SK-N-SH (cell line): ENCODE measurements at regions of chr9 and their contacts with region 1.

Region 1: DNA sequence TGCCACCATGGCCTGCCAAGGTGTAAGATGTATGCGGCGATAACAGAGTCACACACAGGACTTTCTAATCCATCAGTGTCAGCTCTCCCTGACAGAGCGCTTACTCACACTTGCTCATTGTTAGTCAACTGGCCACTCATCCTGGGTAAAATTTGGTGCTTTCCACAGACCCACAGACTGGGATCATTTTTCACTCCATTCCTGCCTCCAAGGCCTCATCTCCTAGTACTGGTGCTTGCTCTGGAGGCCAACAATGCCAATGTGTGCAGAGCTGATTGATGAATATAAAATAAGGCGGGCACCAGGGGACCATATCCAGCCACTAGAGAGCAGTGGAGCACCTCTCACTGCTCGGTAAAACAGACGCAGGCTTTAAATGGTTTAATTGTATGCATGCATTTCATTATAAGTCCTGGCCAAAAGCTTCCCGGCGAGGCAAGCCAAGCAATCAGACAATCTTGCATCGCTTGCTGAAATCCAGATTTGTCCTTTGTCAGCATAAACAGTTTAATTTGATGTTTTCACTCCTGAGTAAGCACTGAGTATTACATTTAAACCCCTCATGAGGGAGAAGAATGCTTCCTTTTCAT is 22.3 kb downstream of the PSMB7 start:
- DNase-seq: peak; percentile 77
- H3K4me3 ChIP-seq: peak overlapping the region in 1 of 2 experiments; percentile 28; a peak in 2 of 4 replicates
- H3K27ac ChIP-seq: peak overlapping the region; percentile 76 to 90
- H3K4me1 ChIP-seq: peaks cover 42 to 51% of the 10 kb centered on the region in 2 experiments
- H3K27me3 ChIP-seq: no peaks in the 10 kb centered on the region
- CTCF ChIP-seq: peak; percentile 69
- EP300 ChIP-seq: peak; percentile 41 to 96
- RAD21 ChIP-seq: peak; percentile 72

Region 2: GRCh38 chr9:124361128-124361527 is 31.8 kb before region 1 on chr9:
- CTCF ChIA-PET with region 1: interaction called, 10 read pairs
- POLR2A ChIA-PET with region 1: no interaction called
- DNase-seq: no peak
- H3K4me3 ChIP-seq: no peak overlapping the region
- H3K27ac ChIP-seq: no peak overlapping the region
- H3K4me1 ChIP-seq: peaks cover 0 to 9% of the 10 kb centered on the region in 2 experiments; a peak in 3 of 4 replicates
- H3K27me3 ChIP-seq: no peaks in the 10 kb centered on the region
- CTCF ChIP-seq: no peak
- EP300 ChIP-seq: no peak
- RAD21 ChIP-seq: no peak

Region 3: GRCh38 chr9:124381170-124381945 is 11.6 kb before region 1 on chr9:
- CTCF ChIA-PET with region 1: interaction called, 87 read pairs
- POLR2A ChIA-PET with region 1: no interaction called
- DNase-seq: no peak
- H3K4me3 ChIP-seq: no peak overlapping the region
- H3K27ac ChIP-seq: no peak overlapping the region
- H3K4me1 ChIP-seq: peaks cover 6 to 9% of the 10 kb centered on the region in 2 experiments; a peak in 3 of 4 replicates
- H3K27me3 ChIP-seq: no peaks in the 10 kb centered on the region
- CTCF ChIP-seq: no peak
- EP300 ChIP-seq: no peak
- RAD21 ChIP-seq: no peak

Region 4: DNA sequence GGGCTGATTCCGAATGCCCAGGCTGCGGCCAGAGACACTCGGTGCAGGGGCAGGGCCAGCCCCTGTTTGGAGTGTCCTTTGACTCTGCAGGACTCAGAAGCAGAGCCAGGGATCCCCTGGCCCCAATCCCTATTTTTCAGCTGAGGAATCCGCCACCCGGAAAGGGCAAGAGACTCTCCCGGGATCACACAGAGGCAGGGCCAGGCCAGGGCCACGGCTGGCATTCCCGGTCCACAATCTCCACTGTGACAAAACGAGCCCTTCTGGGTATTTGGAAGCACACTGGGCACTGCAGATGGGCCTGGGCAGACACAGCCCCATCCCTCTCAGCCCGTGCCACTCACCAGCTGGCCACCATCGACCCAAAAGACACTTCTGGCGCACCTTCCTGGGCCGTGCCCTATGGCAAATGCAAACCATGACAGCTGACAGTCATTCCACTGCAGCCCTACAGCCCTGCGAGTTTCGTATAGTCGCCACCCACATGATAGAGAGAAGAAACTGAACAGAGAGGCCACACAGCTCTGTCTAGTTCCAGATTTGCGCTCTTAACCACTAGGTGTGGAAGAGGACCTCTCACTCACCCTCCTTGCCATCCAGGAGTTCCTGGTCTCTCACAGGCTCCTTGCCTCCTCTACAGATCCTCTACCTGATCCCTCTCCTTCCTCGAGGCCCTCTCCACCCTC is 101.0 kb after region 1 on chr9:
- CTCF ChIA-PET with region 1: no interaction called
- POLR2A ChIA-PET with region 1: no interaction called
- DNase-seq: no peak
- H3K4me3 ChIP-seq: no peak overlapping the region
- H3K27ac ChIP-seq: no peak overlapping the region
- H3K4me1 ChIP-seq: no peaks in the 10 kb centered on the region; a peak in 1 of 4 replicates
- H3K27me3 ChIP-seq: no peaks in the 10 kb centered on the region; the same call in 1 of the 2 replicates
- CTCF ChIP-seq: no peak
- EP300 ChIP-seq: no peak
- RAD21 ChIP-seq: no peak

Region 5: GRCh38 chr9:124532897-124533296 is 139.9 kb after region 1 on chr9:
- CTCF ChIA-PET with region 1: interaction called, 35 read pairs
- POLR2A ChIA-PET with region 1: no interaction called
- DNase-seq: no peak
- H3K4me3 ChIP-seq: no peak overlapping the region
- H3K27ac ChIP-seq: no peak overlapping the region
- H3K4me1 ChIP-seq: peaks cover 0 to 10% of the 10 kb centered on the region in 2 experiments; a peak in 1 of 4 replicates
- H3K27me3 ChIP-seq: no peaks in the 10 kb centered on the region
- CTCF ChIP-seq: no peak
- EP300 ChIP-seq: no peak
- RAD21 ChIP-seq: no peak